ENCODE measurements at regions of chr11 and their contacts with region 1.

Region 1: DNA sequence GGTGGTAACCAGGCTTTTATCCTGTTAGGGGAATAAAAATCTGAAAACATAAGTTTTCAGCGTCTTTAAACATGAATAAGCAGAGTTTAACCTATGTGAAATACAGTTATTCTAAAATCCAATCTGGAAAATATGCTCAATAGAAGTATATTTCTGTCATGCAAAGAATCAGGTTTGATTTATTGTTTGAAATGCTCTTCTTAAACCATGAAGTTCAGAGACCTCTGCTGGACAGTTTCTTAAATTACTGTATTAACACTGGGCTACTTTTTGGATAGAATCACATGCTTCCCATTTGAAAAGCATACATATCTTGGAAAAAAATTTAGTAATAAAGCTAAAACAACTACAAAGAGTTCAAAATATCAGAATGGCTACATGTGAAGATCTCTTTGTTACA is 25.4 kb downstream of the APIP start:
- DNase-seq: peak in 1 of 2 experiments; percentile 64
- H3K4me3 ChIP-seq: no peak overlapping the region
- H3K27ac ChIP-seq: no peak overlapping the region
- H3K4me1 ChIP-seq: peaks cover 37% of the 10 kb centered on the region
- H3K27me3 ChIP-seq: no peaks in the 10 kb centered on the region
- CTCF ChIP-seq: peak; percentile 86

Region 2: GRCh38 chr11:33842236-33842915 is 1048.4 kb before region 1 on chr11:
- CTCF ChIA-PET with region 1: no interaction called
- POLR2A ChIA-PET with region 1: no interaction called
- intact Hi-C with region 1: loop called (anchors 10 kb)
- DNase-seq: no peak
- H3K4me3 ChIP-seq: no peak overlapping the region
- H3K27ac ChIP-seq: no peak overlapping the region
- H3K4me1 ChIP-seq: no peaks in the 10 kb centered on the region
- H3K27me3 ChIP-seq: no peaks in the 10 kb centered on the region
- CTCF ChIP-seq: no peak

Region 3: DNA sequence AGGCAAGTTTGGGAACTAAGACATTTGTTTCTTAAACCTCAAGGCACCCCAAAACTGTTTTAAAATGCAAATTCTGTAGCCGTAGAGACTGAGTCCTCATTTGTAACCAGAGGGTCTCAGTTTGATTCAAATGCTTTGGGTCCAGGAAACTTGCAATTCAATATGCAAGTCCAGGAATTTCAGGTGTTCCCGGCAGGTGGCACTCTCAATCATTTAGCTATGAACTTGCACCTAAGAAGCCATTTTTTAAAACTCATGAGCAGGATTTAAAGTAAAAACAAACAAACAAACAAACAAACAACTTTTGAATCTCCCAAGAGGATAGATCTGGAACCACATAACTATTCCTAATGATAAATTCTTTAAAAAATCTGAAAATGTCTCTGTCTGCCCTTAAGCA is 524.3 kb before region 1 on chr11:
- CTCF ChIA-PET with region 1: no interaction called
- POLR2A ChIA-PET with region 1: no interaction called
- intact Hi-C with region 1: loop called (anchors 5 kb)
- DNase-seq: peak in 1 of 2 experiments; percentile 31
- H3K4me3 ChIP-seq: no peak overlapping the region
- H3K27ac ChIP-seq: no peak overlapping the region
- H3K4me1 ChIP-seq: peaks cover 15% of the 10 kb centered on the region
- H3K27me3 ChIP-seq: no peaks in the 10 kb centered on the region
- CTCF ChIP-seq: peak; percentile 71

Region 4: GRCh38 chr11:34512840-34513681 is 377.8 kb before region 1 on chr11:
- CTCF ChIA-PET with region 1: interaction called, 3 read pairs
- POLR2A ChIA-PET with region 1: no interaction called
- intact Hi-C with region 1: loop called (anchors 1 kb)
- DNase-seq: peak; percentile 58 to 73
- H3K4me3 ChIP-seq: peak overlapping the region; percentile 56
- H3K27ac ChIP-seq: peak overlapping the region; percentile 61
- H3K4me1 ChIP-seq: peaks cover 20% of the 10 kb centered on the region
- H3K27me3 ChIP-seq: no peaks in the 10 kb centered on the region
- CTCF ChIP-seq: peak; percentile 97

Region 5: DNA sequence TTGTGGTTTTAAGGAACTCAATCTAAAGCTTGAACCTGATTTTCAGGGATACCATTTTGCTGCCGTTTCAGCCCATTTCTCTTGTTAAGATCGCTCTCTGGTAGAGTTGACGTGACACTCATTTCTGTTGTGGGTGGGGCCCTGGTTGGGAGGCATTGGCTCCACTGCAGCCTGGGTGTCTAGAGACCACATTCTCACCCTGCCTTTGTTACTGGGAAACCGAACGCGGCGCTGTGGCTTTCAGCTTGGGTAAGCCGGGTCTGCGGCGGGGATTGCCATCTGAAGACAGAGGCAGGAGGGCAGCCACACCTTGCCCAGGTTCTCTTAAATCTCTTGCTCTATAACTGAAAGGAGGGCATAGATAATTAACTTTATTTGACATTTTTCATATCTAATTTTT is 266.7 kb before region 1 on chr11:
- CTCF ChIA-PET with region 1: interaction called, 4 read pairs
- POLR2A ChIA-PET with region 1: no interaction called
- intact Hi-C with region 1: loop called (anchors 1 kb)
- DNase-seq: peak; percentile 79 to 80
- H3K4me3 ChIP-seq: peak overlapping the region; percentile 89
- H3K27ac ChIP-seq: peak overlapping the region; percentile 96
- H3K4me1 ChIP-seq: peaks cover 67% of the 10 kb centered on the region
- H3K27me3 ChIP-seq: no peaks in the 10 kb centered on the region
- CTCF ChIP-seq: peak; percentile 27; the same call in 1 of the 2 replicates

Region 6: DNA sequence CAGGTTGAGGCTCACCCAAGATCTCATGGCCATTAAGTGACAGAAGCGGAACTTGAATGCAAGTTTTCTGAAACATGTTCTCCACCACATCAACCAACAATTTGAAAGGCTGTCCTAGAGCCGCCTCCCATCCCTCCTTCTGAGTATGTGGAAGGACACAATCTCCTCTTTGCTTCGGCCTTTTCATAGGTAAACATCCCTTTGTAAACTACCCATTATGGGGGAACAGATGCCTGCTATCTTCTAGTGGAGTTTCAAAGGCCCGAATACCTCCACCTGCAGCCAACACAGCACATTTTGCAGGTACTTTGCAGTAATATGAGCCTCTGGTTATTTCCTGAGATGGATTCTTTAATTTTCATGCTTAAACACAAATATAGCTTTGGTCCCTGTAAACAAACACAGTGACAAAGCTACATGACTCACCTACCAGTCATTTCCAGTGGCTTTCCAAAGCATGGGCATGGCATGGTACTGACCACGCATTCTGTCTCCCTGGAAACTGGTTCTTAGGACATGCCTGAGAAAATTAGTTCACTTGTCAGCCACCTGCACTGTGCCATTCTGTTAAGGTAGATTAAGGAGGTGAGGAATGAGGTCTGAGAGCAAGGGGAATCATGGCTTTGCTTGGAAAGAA is 209.8 kb before region 1 on chr11:
- CTCF ChIA-PET with region 1: interaction called, 3 read pairs
- POLR2A ChIA-PET with region 1: interaction called, 3 read pairs
- intact Hi-C with region 1: loop called (anchors 2 kb)
- DNase-seq: peak; percentile 85 to 99
- H3K4me3 ChIP-seq: no peak overlapping the region
- H3K27ac ChIP-seq: peak overlapping the region; percentile 86
- H3K4me1 ChIP-seq: peaks cover 60% of the 10 kb centered on the region
- H3K27me3 ChIP-seq: no peaks in the 10 kb centered on the region
- CTCF ChIP-seq: no peak

Region 7: GRCh38 chr11:34926101-34926830 is 35.5 kb after region 1 on chr11:
- CTCF ChIA-PET with region 1: no interaction called
- POLR2A ChIA-PET with region 1: no interaction called
- intact Hi-C with region 1: no loop called
- DNase-seq: peak; percentile 8 to 50
- H3K4me3 ChIP-seq: no peak overlapping the region
- H3K27ac ChIP-seq: no peak overlapping the region
- H3K4me1 ChIP-seq: peaks cover 13% of the 10 kb centered on the region
- H3K27me3 ChIP-seq: no peaks in the 10 kb centered on the region
- CTCF ChIP-seq: peak; percentile 94

Region 8: GRCh38 chr11:35030716-35031213 is 140.0 kb after region 1 on chr11:
- CTCF ChIA-PET with region 1: no interaction called
- POLR2A ChIA-PET with region 1: no interaction called
- intact Hi-C with region 1: no loop called
- DNase-seq: peak; percentile 66 to 95
- H3K4me3 ChIP-seq: peak overlapping the region; percentile 8; the same call in 1 of the 2 replicates
- H3K27ac ChIP-seq: peak overlapping the region; percentile 85
- H3K4me1 ChIP-seq: peaks cover 49% of the 10 kb centered on the region
- H3K27me3 ChIP-seq: no peaks in the 10 kb centered on the region
- CTCF ChIP-seq: no peak